Common myeloid progenitor, CD34-positive (primary cell): ENCODE measurements at regions of chr7 and their contacts with region 1.

Region 1: DNA sequence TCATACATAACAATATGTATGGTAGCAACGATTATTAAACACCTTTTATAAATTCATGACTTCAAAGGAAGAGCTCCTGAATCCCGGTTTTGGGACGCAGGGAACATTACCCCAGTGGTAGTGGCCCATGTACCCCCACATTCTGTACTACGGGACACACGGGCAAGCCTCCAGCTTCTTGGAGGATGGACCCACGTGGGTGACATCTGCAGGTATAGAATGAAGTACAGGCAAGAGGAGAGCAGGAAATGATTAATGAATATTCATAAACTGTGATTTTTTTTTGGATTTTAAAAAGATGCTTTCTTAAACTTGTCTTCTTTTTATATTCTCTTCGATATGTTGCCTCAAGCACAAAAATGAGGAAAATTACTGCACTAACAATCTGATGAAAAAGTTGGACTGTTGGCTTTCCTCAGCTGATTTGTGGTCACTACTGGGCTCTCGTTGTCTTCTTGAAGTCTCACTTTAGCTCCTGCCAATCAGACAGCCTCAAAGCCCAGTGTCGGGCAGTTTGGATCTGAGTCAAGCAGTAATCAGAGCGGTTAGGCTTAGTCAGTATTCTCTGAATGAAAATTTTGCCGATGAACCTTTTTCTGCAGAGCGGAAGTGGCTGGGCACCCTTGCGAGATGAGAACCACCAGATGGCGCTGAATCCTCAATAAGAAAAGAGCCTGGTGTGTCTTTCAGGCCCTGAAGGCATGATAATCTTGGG is 157.7 kb upstream of the CDCA7L start:
- DNase-seq: peak; percentile 60 to 88 (median 80)
- H3K4me3 ChIP-seq: no peak overlapping the region
- H3K27ac ChIP-seq: no peak overlapping the region
- H3K4me1 ChIP-seq: no peaks in the 10 kb centered on the region
- H3K27me3 ChIP-seq: peaks cover 0 to 5% (median 0%) of the 10 kb centered on the region in 5 experiments

Region 2: DNA sequence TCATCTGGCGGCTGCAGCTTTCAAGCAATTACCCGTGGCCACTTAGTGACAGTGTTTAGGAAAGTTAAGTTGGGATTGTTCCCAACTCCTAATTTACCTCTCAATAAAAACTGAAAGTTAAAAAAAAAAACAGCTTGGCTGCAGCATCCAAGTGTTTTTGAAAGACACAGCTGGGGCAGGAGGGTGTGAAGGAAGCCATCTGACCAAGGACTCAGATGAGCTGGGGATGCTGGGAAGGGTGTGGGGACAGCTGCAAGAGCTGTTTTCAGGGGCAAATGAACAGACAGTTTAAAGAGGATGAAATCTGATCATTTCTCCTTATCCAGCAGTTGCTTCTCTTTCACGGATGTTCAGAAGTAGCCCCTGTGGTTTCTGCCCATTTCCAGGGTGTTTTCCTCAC is 28.5 kb before region 1 on chr7:
- CTCF ChIA-PET with region 1: no interaction called
- POLR2A ChIA-PET with region 1: no interaction called
- DNase-seq: no peak
- H3K4me3 ChIP-seq: no peak overlapping the region
- H3K27ac ChIP-seq: no peak overlapping the region
- H3K4me1 ChIP-seq: no peaks in the 10 kb centered on the region
- H3K27me3 ChIP-seq: peaks cover 0 to 1% (median 0%) of the 10 kb centered on the region in 5 experiments

Region 3: GRCh38 chr7:22184549-22185199 is 81.3 kb after region 1 on chr7:
- CTCF ChIA-PET with region 1: no interaction called
- POLR2A ChIA-PET with region 1: no interaction called
- DNase-seq: no peak
- H3K4me3 ChIP-seq: no peak overlapping the region
- H3K27ac ChIP-seq: no peak overlapping the region
- H3K4me1 ChIP-seq: no peaks in the 10 kb centered on the region
- H3K27me3 ChIP-seq: no peaks in the 10 kb centered on the region

Region 4: GRCh38 chr7:22295402-22296264 is 192.2 kb after region 1 on chr7:
- CTCF ChIA-PET with region 1: interaction called, 15 read pairs
- POLR2A ChIA-PET with region 1: no interaction called
- DNase-seq: peak in 1 of 3 donors; percentile 22
- H3K4me3 ChIP-seq: no peak overlapping the region
- H3K27ac ChIP-seq: no peak overlapping the region
- H3K4me1 ChIP-seq: peaks cover 0 to 2% (median 0%) of the 10 kb centered on the region in 4 experiments
- H3K27me3 ChIP-seq: peaks cover 0 to 14% (median 0%) of the 10 kb centered on the region in 5 experiments